Activated CD8-positive, alpha-beta T cell treated with anti-CD3 and anti-CD28 coated beads for 36 hours (primary cell): ENCODE measurements at regions of chr4 and their contacts with region 1.

Region 1: GRCh38 chr4:7939377-7940108 is at the start of gene AFAP1:
- DNase-seq: peak; percentile 88
- ATAC-seq: peak; percentile 98
- H3K4me3 Mint-ChIP-seq: peak within 1 kb of the TSS; percentile 81
- H3K27ac Mint-ChIP-seq: no peak within 1 kb of the TSS
- H3K4me1 Mint-ChIP-seq: peaks cover 33% of the 10 kb centered on the region
- H3K27me3 Mint-ChIP-seq: peaks cover 8% of the 10 kb centered on the region
- CTCF ChIP-seq: no peak
- total RNA-seq, gene AFAP1: 25.5 to 26.5 TPM

Region 2: GRCh38 chr4:7744142-7744804 is 195.3 kb before region 1 on chr4:
- CTCF ChIA-PET with region 1: no interaction called
- POLR2A ChIA-PET with region 1: no interaction called
- intact Hi-C with region 1: no loop called
- DNase-seq: no peak
- ATAC-seq: no peak
- H3K4me3 Mint-ChIP-seq: no peak overlapping the region
- H3K27ac Mint-ChIP-seq: no peak overlapping the region
- H3K4me1 Mint-ChIP-seq: peaks cover 5% of the 10 kb centered on the region
- H3K27me3 Mint-ChIP-seq: no peaks in the 10 kb centered on the region
- CTCF ChIP-seq: no peak

Region 3: DNA sequence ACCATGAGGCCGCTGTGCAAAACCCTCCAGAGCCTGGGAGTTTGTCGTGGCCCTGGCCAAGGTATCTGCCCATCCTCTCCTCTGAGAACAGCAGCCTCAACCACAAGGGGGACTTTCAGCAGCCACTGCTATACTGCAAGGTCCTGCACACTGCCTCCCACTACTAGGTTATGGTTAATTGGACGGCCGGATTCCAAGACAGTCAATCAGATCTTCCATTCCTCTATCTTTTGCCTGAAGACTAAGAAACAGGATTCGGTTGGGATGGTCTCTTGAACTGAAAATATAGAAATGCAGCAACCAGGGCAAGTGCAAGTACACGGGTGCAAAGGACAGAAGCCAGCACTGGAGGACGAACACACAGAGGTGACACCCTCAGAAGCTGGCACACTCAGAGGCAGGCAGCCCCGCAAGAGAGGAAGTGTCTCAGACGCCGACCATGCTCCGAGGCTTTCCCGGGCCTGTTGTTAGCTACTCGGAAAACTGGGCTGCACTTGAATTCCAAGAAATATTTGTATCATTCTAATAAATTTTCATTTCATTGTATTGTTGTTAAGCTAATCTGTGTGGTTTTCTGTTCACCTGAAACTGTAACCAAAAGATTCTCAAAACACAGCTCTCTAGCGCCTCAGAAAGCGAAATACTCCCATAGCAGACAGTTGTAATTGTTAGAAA is 63.2 kb before region 1 on chr4:
- CTCF ChIA-PET with region 1: interaction called, 11 read pairs
- POLR2A ChIA-PET with region 1: interaction called, 3 read pairs
- intact Hi-C with region 1: no loop called
- DNase-seq: peak; percentile 64
- ATAC-seq: peak; percentile 87
- H3K4me3 Mint-ChIP-seq: peak overlapping the region; percentile 40
- H3K27ac Mint-ChIP-seq: peak overlapping the region; percentile 78
- H3K4me1 Mint-ChIP-seq: peaks cover 36% of the 10 kb centered on the region
- H3K27me3 Mint-ChIP-seq: no peaks in the 10 kb centered on the region
- CTCF ChIP-seq: peak; percentile 27